ENCODE measurements at regions of chr16 and their contacts with region 1.

Region 1: GRCh38 chr16:84511180-84511824 is 6.8 kb upstream of the MEAK7 start:
- DNase-seq: peak; percentile 36
- H3K4me3 ChIP-seq: no peak overlapping the region
- CTCF ChIP-seq: peak; percentile 85

Region 2: DNA sequence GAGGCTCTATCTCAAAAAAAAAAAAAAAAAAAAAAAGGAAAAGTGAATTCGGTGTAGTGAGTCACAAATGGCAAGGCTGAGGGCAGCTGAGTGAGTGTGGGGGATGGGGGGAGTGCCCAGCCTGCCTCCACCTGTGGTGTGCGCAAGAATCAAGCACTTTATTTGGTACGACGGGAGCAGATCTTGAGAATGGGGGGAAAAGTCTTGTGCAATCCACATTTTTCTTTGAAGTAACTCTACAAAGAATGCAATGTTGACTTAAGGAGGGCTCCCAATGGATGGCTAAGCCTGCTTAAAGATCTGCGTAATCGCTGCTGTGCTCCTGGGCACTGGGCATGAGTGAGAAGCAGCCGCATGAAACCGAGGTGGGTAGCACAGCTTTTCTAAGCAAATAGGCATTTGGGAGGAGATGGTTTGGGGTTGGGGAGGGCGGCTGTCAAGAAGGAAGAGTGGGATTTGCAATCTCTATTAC is 114.7 kb before region 1 on chr16:
- CTCF ChIA-PET with region 1: no interaction called
- POLR2A ChIA-PET with region 1: no interaction called
- DNase-seq: no peak
- H3K4me3 ChIP-seq: no peak overlapping the region
- CTCF ChIP-seq: no peak

Region 3: DNA sequence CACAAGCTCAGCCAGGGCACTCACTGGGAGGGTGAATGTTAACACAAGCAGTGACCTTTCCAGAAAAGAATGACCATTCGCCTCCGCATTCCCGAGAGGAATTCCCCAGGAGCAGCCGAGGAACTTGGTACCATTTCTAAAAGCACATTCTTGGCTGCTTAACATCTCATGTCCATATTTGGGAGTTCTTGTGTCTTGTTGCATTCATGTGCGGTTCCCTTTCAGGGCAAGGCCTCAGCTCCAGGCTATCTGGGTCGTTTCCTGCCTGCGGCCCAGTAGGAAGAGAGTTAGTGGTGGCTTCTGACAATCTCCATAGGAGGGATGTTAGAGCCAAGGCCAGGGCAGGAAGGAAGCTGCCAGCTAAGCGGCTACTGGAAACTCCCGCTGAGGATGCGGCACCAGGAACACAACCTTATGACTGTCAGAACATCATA is 21.0 kb after region 1 on chr16:
- CTCF ChIA-PET with region 1: interaction called, 19 read pairs
- POLR2A ChIA-PET with region 1: interaction called, 6 read pairs
- DNase-seq: peak; percentile 92
- H3K4me3 ChIP-seq: no peak overlapping the region
- CTCF ChIP-seq: no peak

Region 4: DNA sequence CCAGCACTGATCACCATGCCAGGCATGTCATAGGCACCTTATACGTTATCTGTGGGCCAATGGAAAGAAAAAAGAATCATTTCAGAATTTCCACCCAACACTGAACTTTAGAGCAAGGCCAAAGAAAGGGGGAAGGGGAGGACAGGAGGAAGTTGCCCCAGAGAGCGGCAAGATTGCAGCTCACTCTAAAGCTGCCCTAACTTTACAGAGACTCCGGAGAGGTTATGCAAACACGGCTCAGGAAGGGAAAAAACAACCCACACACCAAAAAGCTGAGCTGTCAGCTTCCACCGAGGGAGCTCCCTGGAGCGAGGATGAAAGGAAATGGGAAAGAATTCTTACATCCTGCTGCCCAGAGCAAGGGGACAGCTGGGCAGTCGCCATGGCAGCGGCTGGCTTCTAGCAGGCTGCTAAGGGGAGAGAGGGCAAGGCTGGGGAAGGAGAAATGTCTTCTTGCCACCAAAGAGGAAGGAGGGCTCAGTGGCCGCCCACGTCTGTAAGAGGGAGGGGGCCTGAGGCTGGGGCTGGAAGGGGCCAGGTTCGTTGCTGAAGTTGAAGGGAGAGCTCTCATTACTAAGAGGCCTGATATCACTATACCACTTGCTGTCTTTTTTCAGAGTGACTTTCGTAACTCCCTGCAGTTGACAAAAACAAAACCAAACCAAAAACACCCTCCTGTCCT is 88.4 kb after region 1 on chr16:
- CTCF ChIA-PET with region 1: interaction called, 24 read pairs
- POLR2A ChIA-PET with region 1: no interaction called
- DNase-seq: peak; percentile 47
- H3K4me3 ChIP-seq: peak overlapping the region; percentile 31
- CTCF ChIP-seq: no peak

Region 5: DNA sequence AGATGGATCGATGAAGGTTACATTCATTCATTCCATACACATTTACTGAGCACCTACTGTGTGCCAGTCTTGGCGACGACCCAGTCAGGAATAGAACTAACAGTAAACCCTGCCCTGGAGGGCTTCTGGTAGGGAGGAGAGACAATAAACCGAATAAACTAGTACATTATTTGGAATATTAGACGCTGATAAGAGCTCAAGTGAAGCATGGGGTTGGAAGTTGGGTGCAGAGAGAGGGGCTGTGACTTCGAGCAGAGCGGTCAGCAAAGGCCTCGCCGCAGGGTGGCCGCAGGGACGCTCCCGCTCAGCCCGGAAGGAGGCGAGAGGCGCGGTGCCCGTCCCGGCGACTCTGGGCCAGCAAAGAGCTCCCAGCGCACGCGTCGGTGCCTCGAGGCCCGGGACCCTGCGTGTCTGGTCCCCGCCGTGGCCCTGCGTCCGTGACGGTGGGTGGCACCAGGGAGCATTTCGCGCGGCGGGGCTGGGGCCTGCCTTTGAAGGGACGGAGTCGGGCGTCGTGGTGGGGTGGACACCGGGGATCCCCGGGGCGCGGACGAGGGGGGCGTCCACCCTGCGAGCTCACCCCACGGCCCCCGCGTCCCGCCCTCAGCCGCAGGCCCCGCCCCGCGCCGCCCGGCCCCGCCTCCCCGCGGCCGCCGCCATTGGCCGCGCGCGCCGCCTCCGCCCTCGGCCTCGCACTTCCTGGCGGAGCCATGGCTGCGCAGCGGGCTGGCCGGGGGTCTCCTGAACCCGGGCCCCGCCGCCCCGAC is 136.7 kb after region 1 on chr16 and contains the start of gene KLHL36:
- CTCF ChIA-PET with region 1: interaction called, 30 read pairs
- POLR2A ChIA-PET with region 1: no interaction called
- DNase-seq: no peak
- H3K4me3 ChIP-seq: peak within 1 kb of the TSS; percentile 68
- CTCF ChIP-seq: no peak